ENCODE measurements at regions of chr12 and their contacts with region 1.

Region 1: GRCh38 chr12:47029903-47030302 is 49.5 kb upstream of the PCED1B start:
- DNase-seq: no peak
- H3K4me3 ChIP-seq: no peak overlapping the region
- H3K27ac ChIP-seq: no peak overlapping the region
- H3K4me1 ChIP-seq: no peaks in the 10 kb centered on the region
- H3K27me3 ChIP-seq: no peaks in the 10 kb centered on the region
- CTCF ChIP-seq: no peak
- POLR2A ChIP-seq: no peak

Region 2: DNA sequence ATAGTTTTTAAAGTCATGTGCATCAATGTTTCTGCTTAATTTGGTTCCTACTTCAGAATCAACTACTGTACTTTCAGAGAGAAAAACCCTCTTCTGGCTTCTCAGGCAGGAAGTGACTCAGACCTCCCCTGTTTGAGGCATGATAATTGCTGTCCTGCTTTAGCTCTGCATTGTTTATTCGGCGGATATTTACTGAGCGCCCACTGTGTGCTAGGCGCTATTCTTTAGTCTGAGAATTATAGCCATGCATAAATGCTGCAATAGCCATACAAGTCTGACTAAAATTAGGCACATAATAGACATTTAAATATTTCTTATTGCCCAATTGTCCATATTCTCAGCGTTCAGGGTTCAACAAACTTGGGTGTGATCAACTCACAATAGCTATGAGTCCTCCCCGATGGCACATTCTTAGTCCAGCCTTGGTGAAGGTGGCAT is 55.9 kb after region 1 on chr12:
- intact Hi-C with region 1: loop called (anchors 2 kb)
- DNase-seq: no peak
- H3K4me3 ChIP-seq: no peak overlapping the region
- H3K27ac ChIP-seq: peak overlapping the region; percentile 64 to 71
- H3K4me1 ChIP-seq: no peaks in the 10 kb centered on the region
- H3K27me3 ChIP-seq: no peaks in the 10 kb centered on the region
- CTCF ChIP-seq: no peak
- POLR2A ChIP-seq: no peak